Activated B cell treated with CpG ODN at 0.5 μM for 24 hours (primary cell): ENCODE measurements at regions of chr7 and their contacts with region 1.

Region 1: DNA sequence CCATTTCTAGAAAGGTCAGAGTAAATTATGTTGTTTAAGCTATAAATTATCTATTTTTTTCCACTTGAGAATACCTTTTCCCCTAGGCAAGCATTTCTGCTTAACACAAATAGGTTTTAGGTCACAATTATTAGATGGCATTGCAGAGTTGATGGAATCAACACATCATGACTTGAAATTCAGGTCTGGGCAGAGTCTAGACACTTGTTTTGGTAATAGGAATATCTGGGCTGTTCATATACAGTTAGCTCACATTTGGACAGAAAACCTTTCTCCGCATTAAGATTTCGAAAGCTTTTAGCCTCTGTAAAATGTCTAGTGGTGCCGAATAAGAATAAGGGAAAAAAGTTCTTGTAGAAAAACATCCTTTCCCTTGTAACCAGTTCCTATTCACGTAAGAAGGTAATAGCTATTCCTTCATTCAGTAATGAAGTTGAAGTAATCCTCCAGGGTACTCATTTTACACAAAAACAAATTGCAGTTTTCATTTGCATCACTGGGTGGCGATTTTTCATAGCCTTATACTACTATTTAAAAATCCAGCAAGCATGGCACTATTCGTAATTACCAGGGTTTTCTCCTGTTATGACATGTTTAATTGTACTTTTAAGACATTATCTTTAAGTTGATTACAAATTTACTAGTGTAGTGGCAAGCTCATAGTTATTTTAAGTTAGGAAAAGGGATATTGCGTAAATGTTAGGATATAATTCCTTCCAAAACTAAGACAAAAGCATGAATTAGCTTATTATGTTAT is 37.0 kb downstream of the RPA3 start:
- DNase-seq: no peak
- ATAC-seq: peak; percentile 84
- H3K4me3 Mint-ChIP-seq: no peak overlapping the region
- H3K27ac Mint-ChIP-seq: peak overlapping the region; percentile 50
- H3K4me1 Mint-ChIP-seq: peaks cover 27% of the 10 kb centered on the region
- H3K27me3 Mint-ChIP-seq: no peaks in the 10 kb centered on the region
- CTCF ChIP-seq: no peak

Region 2: DNA sequence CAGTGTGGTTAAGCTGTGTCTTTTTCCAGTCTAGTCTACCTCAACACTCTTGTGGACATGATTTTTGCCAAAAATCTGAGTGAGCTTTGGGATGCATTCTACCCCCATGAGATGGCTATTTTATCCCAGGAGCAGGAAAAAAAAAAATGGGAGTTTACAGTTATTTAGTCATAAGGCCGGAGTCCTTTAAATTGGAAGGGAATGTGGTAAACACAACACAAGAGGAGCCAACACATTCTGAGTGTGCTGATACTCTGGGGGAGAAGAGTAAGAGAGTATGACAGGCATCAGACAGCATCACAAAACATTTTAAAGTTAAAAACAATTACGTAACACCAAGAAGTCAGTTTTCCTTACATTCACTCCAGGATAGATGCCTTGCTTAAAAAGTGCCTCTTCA is 452.9 kb before region 1 on chr7:
- CTCF ChIA-PET with region 1: no interaction called
- POLR2A ChIA-PET with region 1: no interaction called
- intact Hi-C with region 1: no loop called
- DNase-seq: no peak
- ATAC-seq: no peak
- H3K4me3 Mint-ChIP-seq: no peak overlapping the region
- H3K27ac Mint-ChIP-seq: no peak overlapping the region
- H3K4me1 Mint-ChIP-seq: peaks cover 6% of the 10 kb centered on the region
- H3K27me3 Mint-ChIP-seq: no peaks in the 10 kb centered on the region
- CTCF ChIP-seq: no peak

Region 3: DNA sequence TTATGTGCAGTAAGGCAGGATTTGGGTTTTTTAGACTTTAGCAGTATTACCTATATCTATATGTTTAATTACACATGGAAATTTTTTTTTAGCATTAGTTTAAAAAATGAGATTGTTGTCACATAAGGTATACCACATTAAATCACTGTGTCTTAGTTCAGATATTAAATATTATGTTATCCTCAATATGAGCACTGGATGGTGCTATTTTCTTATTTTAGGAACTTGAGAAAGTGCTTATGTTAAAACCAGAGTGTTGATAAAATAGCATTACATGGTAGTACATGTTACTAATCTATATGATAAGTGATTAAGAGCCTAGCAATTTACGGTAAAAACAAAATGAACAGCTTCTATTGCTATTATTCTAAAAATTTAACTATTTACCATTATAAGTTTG is 85.9 kb before region 1 on chr7:
- CTCF ChIA-PET with region 1: interaction called, 11 read pairs
- POLR2A ChIA-PET with region 1: no interaction called
- intact Hi-C with region 1: no loop called
- DNase-seq: no peak
- ATAC-seq: peak; percentile 56
- H3K4me3 Mint-ChIP-seq: no peak overlapping the region
- H3K27ac Mint-ChIP-seq: no peak overlapping the region
- H3K4me1 Mint-ChIP-seq: no peaks in the 10 kb centered on the region
- H3K27me3 Mint-ChIP-seq: no peaks in the 10 kb centered on the region
- CTCF ChIP-seq: no peak

Region 4: GRCh38 chr7:7884855-7885254 is 203.5 kb after region 1 on chr7:
- CTCF ChIA-PET with region 1: no interaction called
- POLR2A ChIA-PET with region 1: no interaction called
- intact Hi-C with region 1: no loop called
- DNase-seq: no peak
- ATAC-seq: no peak
- H3K4me3 Mint-ChIP-seq: no peak overlapping the region
- H3K27ac Mint-ChIP-seq: no peak overlapping the region
- H3K4me1 Mint-ChIP-seq: peaks cover 23% of the 10 kb centered on the region
- H3K27me3 Mint-ChIP-seq: no peaks in the 10 kb centered on the region
- CTCF ChIP-seq: no peak

Region 5: DNA sequence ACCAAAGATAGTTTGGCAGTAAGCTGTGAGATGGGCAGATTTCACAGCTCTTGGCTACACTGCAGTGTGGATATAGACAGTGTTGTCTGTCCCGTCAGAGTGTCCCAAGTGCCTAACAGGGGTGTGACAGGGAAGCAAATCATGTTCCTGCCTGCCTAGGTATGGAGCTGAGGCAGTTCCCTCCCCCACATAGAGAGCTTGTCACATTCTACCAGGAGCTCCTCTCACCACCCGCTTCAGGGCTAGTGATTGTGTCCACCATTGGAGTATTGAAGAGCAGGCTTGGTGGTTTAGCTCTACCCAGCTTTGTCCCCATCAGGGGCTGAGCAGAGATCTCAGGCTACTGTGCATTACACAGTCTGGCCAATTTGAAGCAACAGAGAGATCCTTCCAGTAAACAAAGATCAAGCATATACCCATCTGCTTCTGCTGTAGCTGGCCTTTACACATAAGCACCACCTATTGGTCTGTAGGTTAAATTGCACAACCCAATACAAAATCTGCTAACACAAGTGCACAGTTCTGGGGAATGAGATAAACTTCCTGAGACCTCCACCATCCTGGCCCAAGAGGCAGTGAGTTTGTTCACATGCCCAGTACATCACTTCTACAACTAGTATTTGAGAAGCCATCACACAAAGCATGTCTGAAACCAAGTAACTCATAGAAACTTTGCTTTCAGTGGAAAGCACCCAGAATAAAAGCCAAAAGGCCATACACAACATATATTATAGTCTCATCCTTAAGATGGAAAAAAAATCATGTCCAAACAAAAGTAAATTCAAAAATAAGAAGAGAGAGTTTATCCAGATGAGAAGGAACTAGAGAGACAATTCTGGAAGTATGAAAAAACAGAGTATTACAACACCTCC is 354.5 kb after region 1 on chr7:
- CTCF ChIA-PET with region 1: interaction called, 45 read pairs
- POLR2A ChIA-PET with region 1: interaction called, 5 read pairs
- intact Hi-C with region 1: loop called (anchors 1 kb)
- DNase-seq: no peak
- ATAC-seq: peak; percentile 92
- H3K4me3 Mint-ChIP-seq: no peak overlapping the region
- H3K27ac Mint-ChIP-seq: peak overlapping the region; percentile 21
- H3K4me1 Mint-ChIP-seq: peaks cover 10% of the 10 kb centered on the region
- H3K27me3 Mint-ChIP-seq: no peaks in the 10 kb centered on the region
- CTCF ChIP-seq: no peak

Region 6: DNA sequence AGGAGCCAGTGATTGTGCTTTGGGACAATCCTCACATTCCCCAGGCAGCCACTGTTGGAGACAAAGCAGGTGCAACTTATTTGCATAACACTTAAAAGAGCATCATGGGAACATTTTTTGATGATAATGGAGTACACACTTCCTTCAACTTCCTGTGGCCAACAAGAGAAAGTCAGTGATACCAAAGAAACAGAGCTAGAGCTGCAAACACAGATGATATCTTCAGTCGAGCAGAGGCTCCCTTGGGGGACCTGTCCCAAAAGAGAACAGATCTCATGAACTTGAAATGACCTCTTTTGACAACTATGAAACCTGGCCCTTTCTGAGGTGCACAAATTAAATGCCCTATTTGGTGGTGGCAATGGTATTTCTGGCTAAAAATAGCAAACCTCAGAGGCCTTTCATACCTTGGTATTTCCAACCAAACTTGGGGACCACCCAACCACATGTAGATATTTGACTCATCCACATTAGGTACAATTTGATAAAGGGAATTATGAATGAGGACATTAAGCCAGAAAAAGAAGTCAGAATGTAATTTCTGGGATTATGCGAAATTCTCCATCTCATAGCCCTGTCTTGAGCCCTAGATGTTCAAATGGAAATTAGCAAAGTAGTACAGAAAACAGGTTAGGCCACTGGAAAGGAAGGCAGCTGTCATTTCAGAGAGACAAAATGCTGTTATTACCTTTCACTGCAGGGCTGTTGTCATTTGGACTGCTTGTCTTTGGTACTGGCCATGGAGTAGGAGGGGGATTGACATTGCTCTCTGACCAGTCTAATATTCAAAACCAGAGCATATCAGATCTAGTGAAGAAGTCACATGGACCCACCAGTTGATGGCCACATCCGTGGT is 434.4 kb after region 1 on chr7:
- CTCF ChIA-PET with region 1: no interaction called
- POLR2A ChIA-PET with region 1: no interaction called
- intact Hi-C with region 1: no loop called
- DNase-seq: no peak
- ATAC-seq: peak; percentile 92
- H3K4me3 Mint-ChIP-seq: peak overlapping the region; percentile 46
- H3K27ac Mint-ChIP-seq: peak overlapping the region; percentile 74
- H3K4me1 Mint-ChIP-seq: peaks cover 48% of the 10 kb centered on the region
- H3K27me3 Mint-ChIP-seq: no peaks in the 10 kb centered on the region
- CTCF ChIP-seq: no peak

Region 7: DNA sequence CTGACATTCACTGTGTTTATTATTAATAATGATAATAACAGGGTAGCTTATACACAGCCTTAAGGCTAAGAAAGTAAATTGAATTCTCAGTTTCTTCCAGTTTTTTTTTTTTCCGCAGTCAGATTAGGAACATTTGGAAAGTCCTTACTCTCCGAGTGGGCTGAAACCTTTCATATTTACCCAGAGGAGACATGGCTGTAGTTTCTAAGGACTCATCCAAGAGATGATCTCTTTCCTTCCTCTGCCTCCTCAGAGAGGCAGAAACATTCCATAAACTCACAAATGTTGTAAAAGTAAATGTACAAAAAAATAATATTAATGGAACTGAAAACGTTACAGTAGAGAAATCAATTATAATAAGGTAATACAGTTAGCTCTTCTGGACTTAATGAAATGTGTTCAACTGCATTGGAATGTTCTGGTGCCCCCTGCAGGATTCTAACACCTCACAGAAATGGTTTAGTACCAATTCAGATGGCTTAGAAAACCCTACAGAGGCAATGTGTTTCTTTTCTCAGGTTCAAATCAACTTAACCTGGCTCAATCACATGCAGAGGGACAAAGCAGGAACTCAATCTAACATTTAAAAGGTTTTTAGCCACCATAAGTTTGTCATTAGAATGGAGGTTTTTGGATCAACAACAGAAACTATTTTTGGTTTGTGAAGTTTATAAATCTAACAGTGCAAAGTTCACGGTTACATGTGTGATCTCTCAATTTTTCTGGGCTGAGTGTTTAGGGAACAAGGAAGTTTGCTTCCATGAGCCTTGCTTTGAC is 508.9 kb after region 1 on chr7:
- CTCF ChIA-PET with region 1: interaction called, 89 read pairs
- POLR2A ChIA-PET with region 1: interaction called, 4 read pairs
- intact Hi-C with region 1: loop called (anchors 1 kb)
- DNase-seq: no peak
- ATAC-seq: peak; percentile 87
- H3K4me3 Mint-ChIP-seq: no peak overlapping the region
- H3K27ac Mint-ChIP-seq: no peak overlapping the region
- H3K4me1 Mint-ChIP-seq: peaks cover 20% of the 10 kb centered on the region
- H3K27me3 Mint-ChIP-seq: no peaks in the 10 kb centered on the region
- CTCF ChIP-seq: no peak

Region 8: DNA sequence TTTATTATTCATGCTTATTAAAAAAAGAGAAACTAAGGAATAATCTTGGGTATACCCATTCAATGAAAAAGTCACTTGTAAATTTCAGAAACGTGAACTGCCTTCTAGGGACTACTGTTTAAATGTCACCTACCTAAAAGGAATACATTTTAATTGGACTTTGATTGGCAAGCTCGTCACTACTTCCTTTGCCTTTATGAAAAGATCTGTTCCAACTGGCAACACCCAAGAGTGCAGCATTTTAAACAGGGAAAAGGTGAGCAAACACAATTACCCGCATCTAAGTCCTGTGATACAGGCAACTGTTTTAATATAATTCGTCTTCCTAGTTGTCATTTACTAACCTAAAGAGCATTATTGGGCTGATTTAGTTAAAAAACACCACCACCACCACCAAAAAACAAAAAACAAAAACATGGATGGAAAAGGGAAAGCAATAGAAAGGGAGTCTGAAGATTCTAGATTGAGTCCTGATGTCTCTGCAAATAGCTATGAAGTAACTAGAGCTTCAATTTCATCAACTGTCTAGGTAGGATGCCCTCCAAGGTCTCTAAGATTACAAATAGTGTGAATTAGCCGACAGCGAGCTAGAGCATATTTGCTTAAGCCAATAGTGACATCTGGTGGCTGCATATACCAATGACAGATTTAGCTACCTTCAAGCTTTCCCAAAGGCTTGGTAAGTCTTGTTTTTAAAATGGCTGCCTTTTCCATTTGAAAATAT is 614.4 kb after region 1 on chr7:
- CTCF ChIA-PET with region 1: interaction called, 4 read pairs
- POLR2A ChIA-PET with region 1: no interaction called
- intact Hi-C with region 1: loop called (anchors 5 kb)
- DNase-seq: no peak
- ATAC-seq: peak; percentile 67
- H3K4me3 Mint-ChIP-seq: no peak overlapping the region
- H3K27ac Mint-ChIP-seq: no peak overlapping the region
- H3K4me1 Mint-ChIP-seq: no peaks in the 10 kb centered on the region
- H3K27me3 Mint-ChIP-seq: peaks cover 6% of the 10 kb centered on the region
- CTCF ChIP-seq: no peak